PC-3 (cell line): ENCODE measurements at regions of chr20 and their contacts with region 1.

Region 1: DNA sequence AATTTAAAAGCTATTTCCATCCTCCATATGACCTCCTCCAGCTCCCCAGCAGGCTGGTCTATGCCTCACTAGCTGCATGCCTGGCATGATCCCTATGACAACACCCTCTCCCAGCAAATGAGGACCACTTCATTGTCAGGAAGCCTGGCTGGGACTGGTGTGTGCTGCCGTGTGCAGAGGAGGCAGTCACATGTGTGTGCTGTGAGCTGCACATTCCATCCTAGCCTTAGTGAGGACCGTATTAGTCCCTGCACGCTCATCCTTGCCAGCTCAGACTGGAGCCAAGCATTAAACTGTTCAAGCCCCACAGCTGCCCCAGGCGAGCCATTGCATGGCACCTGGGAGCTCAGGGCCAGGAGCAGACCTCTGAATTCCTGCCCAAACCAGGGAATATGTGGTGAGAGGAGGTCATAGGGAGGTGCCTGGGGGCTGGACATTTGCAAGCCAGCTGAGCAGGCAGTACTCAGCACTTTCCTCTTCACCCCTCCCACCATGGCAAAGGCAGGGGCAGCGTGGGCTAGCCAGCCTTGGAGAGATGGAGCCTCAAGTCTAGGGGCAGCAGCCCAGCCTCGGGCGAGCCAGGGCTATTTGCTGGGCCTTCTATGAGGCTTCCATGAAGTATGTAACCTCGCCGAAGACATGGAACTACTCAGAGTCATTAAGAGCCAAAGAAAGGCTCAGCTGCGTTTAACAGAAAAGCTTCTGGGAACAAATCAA is 8.7 kb upstream of the CCN5 start:
- DNase-seq: no peak
- ATAC-seq: no peak
- H3K4me3 ChIP-seq: no peak overlapping the region
- H3K27ac ChIP-seq: no peak overlapping the region
- H3K4me1 ChIP-seq: peaks cover 12% of the 10 kb centered on the region
- H3K27me3 ChIP-seq: no peaks in the 10 kb centered on the region
- CTCF ChIP-seq: no peak

Region 2: DNA sequence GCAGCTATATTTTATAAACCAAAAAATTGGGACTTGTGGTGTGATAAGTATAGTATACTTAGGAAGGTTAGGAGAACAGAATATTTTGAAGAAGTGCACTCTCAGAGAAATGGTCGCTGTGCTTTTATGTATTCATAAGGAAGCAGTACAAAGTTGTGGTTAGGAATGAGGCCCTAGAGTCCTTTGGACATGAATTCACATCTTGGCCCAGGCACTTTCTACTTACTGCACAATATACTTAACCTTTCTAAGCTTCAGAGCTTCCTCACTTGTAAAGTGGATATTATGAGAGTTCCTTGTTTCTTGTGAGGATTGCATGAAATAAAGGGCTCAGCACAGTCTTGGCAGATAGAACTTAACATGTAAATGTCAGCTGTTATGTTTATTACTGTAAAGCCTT is 163.6 kb before region 1 on chr20:
- CTCF ChIA-PET with region 1: no interaction called
- POLR2A ChIA-PET with region 1: no interaction called
- intact Hi-C with region 1: no loop called
- DNase-seq: no peak
- ATAC-seq: no peak
- H3K4me3 ChIP-seq: no peak overlapping the region
- H3K27ac ChIP-seq: no peak overlapping the region
- H3K4me1 ChIP-seq: no peaks in the 10 kb centered on the region
- H3K27me3 ChIP-seq: no peaks in the 10 kb centered on the region
- CTCF ChIP-seq: no peak

Region 3: GRCh38 chr20:44858606-44859360 is 152.3 kb after region 1 on chr20:
- CTCF ChIA-PET with region 1: no interaction called
- POLR2A ChIA-PET with region 1: no interaction called
- intact Hi-C with region 1: no loop called
- DNase-seq: no peak
- ATAC-seq: no peak
- H3K4me3 ChIP-seq: no peak overlapping the region
- H3K27ac ChIP-seq: no peak overlapping the region
- H3K4me1 ChIP-seq: peaks cover 7% of the 10 kb centered on the region; the same call in 1 of the 2 replicates
- H3K27me3 ChIP-seq: peaks cover 13% of the 10 kb centered on the region
- CTCF ChIP-seq: no peak

Region 4: DNA sequence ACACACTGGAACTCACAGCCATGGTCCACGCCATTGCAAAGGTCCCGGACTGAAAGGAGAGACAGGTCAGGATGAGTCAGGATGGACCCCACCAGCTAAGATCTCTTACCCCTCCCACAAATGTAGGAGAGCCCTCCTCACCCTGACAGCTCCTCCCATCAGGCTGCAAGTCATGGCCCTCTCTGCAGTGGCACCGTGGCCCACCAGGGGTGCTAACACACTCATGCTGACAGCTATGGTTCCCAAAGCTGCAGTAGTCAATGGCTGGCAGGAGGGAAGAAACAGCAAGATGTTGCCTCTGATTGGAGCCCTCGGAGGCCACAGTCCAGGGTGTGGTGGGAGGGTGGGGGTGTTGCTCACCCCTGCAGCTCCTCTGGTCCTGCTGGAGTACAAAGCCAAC is 594.5 kb after region 1 on chr20:
- CTCF ChIA-PET with region 1: no interaction called
- POLR2A ChIA-PET with region 1: interaction called, 21 read pairs
- intact Hi-C with region 1: no loop called
- DNase-seq: peak; percentile 47
- ATAC-seq: peak; percentile 81
- H3K4me3 ChIP-seq: no peak overlapping the region
- H3K27ac ChIP-seq: no peak overlapping the region
- H3K4me1 ChIP-seq: no peaks in the 10 kb centered on the region
- H3K27me3 ChIP-seq: no peaks in the 10 kb centered on the region
- CTCF ChIP-seq: peak; percentile 58